H1 (cell line): ENCODE measurements at regions of chrX and their contacts with region 1.

Region 1: GRCh38 chrX:119871599-119872395 is at the starts of genes NDUFA1 and RNF113A:
- DNase-seq: peak; percentile 60 to 74
- H3K4me3 ChIP-seq: peak within 1 kb of the TSS; percentile 81 to 95 (median 90)
- H3K27ac ChIP-seq: peak within 1 kb of the TSS; percentile 84
- H3K4me1 ChIP-seq: no peaks in the 10 kb centered on the region
- H3K27me3 ChIP-seq: no peaks in the 10 kb centered on the region
- CTCF ChIP-seq: no peak
- EP300 ChIP-seq: no peak
- POLR2A ChIP-seq: peak; percentile 34 to 64
- RAD21 ChIP-seq: no peak
- total RNA-seq, gene NDUFA1: 69.7 and 74.1 TPM in 2 replicates
- total RNA-seq, gene RNF113A: 14.2 and 14.3 TPM in 2 replicates

Region 2: GRCh38 chrX:119852382-119853353 is 19.1 kb before region 1 on chrX and contains the start of gene UPF3B:
- CTCF ChIA-PET with region 1: no interaction called
- POLR2A ChIA-PET with region 1: interaction called, 12 read pairs
- DNase-seq: peak; percentile 85 to 93
- H3K4me3 ChIP-seq: peak within 1 kb of the TSS; percentile 77 to 99 (median 92)
- H3K27ac ChIP-seq: peak within 1 kb of the TSS; percentile 95
- H3K4me1 ChIP-seq: no peaks in the 10 kb centered on the region
- H3K27me3 ChIP-seq: no peaks in the 10 kb centered on the region
- CTCF ChIP-seq: no peak
- EP300 ChIP-seq: no peak
- POLR2A ChIP-seq: peak; percentile 85 to 86
- RAD21 ChIP-seq: no peak
- total RNA-seq, gene UPF3B: 20.9 and 22.2 TPM in 2 replicates

Region 3: GRCh38 chrX:119887721-119888425 is 16.1 kb after region 1 on chrX:
- CTCF ChIA-PET with region 1: interaction called, 13 read pairs
- POLR2A ChIA-PET with region 1: interaction called, 3 read pairs
- DNase-seq: peak; percentile 53 to 82
- H3K4me3 ChIP-seq: peak overlapping the region; percentile 47 to 65 (median 52)
- H3K27ac ChIP-seq: no peak overlapping the region
- H3K4me1 ChIP-seq: no peaks in the 10 kb centered on the region; a peak in 1 of 7 replicates
- H3K27me3 ChIP-seq: no peaks in the 10 kb centered on the region
- CTCF ChIP-seq: peak; percentile 65 to 81 (median 80)
- EP300 ChIP-seq: no peak
- POLR2A ChIP-seq: no peak
- RAD21 ChIP-seq: peak; percentile 23 to 47; a peak in 2 of 4 replicates